ENCODE measurements at regions of chr7 and their contacts with region 1.

Region 1: GRCh38 chr7:101542527-101543241 is 86.4 kb downstream of the MYL10 start:
- DNase-seq: peak; percentile 47 to 75 (median 71)
- H3K4me3 ChIP-seq: no peak overlapping the region
- H3K27ac ChIP-seq: no peak overlapping the region
- H3K4me1 ChIP-seq: no peaks in the 10 kb centered on the region
- H3K27me3 ChIP-seq: no peaks in the 10 kb centered on the region
- CTCF ChIP-seq: peak; percentile 71 to 86 (median 79)
- EP300 ChIP-seq: no peak
- POLR2A ChIP-seq: no peak

Region 2: GRCh38 chr7:101426303-101427011 is 116.2 kb before region 1 on chr7:
- intact Hi-C with region 1: no loop called
- DNase-seq: no peak
- H3K4me3 ChIP-seq: no peak overlapping the region
- H3K27ac ChIP-seq: no peak overlapping the region
- H3K4me1 ChIP-seq: no peaks in the 10 kb centered on the region
- H3K27me3 ChIP-seq: no peaks in the 10 kb centered on the region
- CTCF ChIP-seq: no peak
- EP300 ChIP-seq: no peak
- POLR2A ChIP-seq: no peak

Region 3: DNA sequence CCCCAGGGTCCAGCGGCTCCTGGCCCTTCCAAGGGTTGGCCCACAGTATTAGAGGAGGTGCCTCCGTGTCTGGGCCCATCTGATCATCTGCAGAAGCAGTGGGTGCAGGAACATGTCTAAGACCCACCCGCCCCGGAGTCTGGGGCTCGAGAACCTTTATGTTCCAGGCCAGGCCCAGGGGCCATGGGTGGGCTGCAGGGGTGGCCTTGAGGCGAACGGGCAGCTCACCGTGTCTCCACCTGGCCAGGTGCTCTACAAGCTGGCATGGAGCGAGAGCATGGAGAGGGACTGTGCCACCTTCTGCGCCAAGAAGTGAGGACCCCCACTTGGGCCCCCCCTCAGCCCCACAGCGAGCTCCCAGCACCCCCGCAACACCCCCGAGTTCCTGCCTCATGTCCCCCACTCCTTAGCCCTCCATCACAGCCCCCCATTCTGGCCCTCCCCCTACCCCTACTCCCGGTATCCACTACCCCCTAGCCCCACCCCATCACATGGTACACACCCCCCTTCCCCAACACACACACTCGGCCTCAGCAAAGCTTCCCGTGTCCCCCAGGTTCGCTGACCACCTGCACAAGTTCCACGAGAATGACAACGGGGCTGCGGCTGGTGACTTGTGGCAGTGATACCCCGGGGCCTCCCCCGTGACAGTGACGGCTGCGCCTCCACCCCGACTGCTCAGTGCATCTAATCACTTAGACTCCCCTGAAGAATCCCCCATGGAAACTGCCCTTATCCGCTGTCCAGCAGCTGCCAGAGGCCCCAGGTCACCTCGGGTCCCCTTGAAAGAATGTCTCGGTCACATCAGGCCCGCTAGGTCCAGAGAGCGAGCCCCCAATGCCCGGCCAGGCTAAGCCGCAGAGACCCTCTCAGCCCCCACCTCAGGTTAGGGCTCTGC is 740.0 kb after region 1 on chr7:
- intact Hi-C with region 1: no loop called
- DNase-seq: no peak
- H3K4me3 ChIP-seq: no peak overlapping the region
- H3K27ac ChIP-seq: no peak overlapping the region
- H3K4me1 ChIP-seq: peaks cover 4% of the 10 kb centered on the region
- H3K27me3 ChIP-seq: no peaks in the 10 kb centered on the region
- CTCF ChIP-seq: no peak
- EP300 ChIP-seq: no peak
- POLR2A ChIP-seq: no peak

Region 4: DNA sequence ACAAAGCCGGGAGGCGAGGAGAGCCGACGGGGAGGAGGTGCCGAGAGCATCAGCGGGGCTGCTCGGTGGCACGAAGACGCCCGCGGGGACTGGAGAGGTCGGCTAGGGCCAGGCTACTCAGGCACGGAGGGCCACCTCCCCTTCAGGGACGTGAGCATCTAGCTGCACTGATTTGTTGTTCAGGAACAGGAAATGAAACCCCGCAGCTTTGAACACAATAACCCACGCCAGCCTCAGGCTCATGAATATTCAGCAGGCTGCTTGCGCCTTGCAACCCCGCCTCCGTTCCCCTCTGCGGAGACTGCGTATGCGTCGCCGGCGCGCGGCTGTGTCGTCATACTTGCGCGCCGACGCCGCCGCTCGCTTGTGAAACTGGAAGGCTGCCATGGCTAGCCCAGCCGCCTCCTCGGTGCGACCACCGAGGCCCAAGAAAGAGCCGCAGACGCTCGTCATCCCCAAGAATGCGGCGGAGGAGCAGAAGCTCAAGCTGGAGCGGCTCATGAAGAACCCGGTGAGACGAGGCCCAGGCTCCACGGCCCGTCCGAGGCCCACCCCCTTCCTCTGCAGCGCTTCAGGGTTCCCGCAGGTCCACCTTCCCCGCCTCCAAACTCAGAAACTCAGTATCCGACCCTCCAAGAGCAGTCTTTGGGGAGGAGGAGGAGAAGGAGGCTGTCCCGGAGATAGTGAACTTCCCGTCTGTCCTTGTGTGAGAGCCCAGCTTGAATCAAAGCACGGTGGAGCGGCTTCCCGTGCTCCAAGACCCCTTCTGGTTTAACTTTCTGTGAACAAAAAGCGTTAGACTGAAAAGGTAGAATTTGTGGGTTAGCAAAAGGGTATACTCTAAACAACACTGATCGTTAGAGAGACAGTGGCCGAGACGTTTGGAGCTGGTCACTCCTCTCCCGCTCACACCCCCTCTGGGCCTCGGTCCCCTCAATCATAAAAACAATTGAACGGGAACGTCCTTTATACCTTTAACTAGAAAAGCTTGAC is 853.6 kb after region 1 on chr7 and contains the start of gene PRKRIP1:
- intact Hi-C with region 1: loop called in 1 of 4 experiments (anchors 10 kb)
- DNase-seq: peak; percentile 69 to 85 (median 82)
- H3K4me3 ChIP-seq: peak within 1 kb of the TSS; percentile 93
- H3K27ac ChIP-seq: peak within 1 kb of the TSS; percentile 46 to 76
- H3K4me1 ChIP-seq: peaks cover 4% of the 10 kb centered on the region
- H3K27me3 ChIP-seq: no peaks in the 10 kb centered on the region
- CTCF ChIP-seq: no peak
- EP300 ChIP-seq: no peak
- POLR2A ChIP-seq: peak; percentile 10
- total RNA-seq, gene PRKRIP1: 17.4 to 28.8 (median 23.9) TPM